H1 (cell line): ENCODE measurements at regions of chr5 and their contacts with region 1.

Region 1: GRCh38 chr5:108748401-108749127 is 867 bp downstream of the FER start:
- DNase-seq: peak; percentile 98 to 99
- H3K4me3 ChIP-seq: peak overlapping the region; percentile 75 to 100 (median 82)
- H3K27ac ChIP-seq: peak overlapping the region; percentile 95
- H3K4me1 ChIP-seq: peaks cover 0 to 2% (median 0%) of the 10 kb centered on the region in 4 experiments; a peak in 2 of 7 replicates
- H3K27me3 ChIP-seq: no peaks in the 10 kb centered on the region
- CTCF ChIP-seq: peak; percentile 16 to 20 (median 19); a peak in 3 of 4 replicates
- EP300 ChIP-seq: no peak
- POLR2A ChIP-seq: peak; percentile 98
- RAD21 ChIP-seq: peak in 1 of 2 experiments; percentile 22; a peak in 2 of 4 replicates

Region 2: GRCh38 chr5:108727651-108728565 is 20.7 kb before region 1 on chr5:
- CTCF ChIA-PET with region 1: interaction called, 11 read pairs
- POLR2A ChIA-PET with region 1: interaction called, 62 read pairs
- DNase-seq: peak; percentile 77 to 93
- H3K4me3 ChIP-seq: peak overlapping the region; percentile 76 to 85 (median 80)
- H3K27ac ChIP-seq: peak overlapping the region; percentile 84; the same call in 1 of the 2 replicates
- H3K4me1 ChIP-seq: peaks cover 0 to 4% (median 3%) of the 10 kb centered on the region in 4 experiments; a peak in 3 of 7 replicates
- H3K27me3 ChIP-seq: no peaks in the 10 kb centered on the region
- CTCF ChIP-seq: no peak
- EP300 ChIP-seq: 0 out of 3 replicates have a peak, but pooled peaks of 1 of the 2 experiments have one; percentile 6
- POLR2A ChIP-seq: peak in 1 of 2 experiments; percentile 94; a peak in 2 of 3 replicates
- RAD21 ChIP-seq: peak; percentile 18 to 34; a peak in 3 of 4 replicates